Heart left ventricle (tissue), 16 donors: ENCODE measurements at regions of chr11 and their contacts with region 1.

Region 1: DNA sequence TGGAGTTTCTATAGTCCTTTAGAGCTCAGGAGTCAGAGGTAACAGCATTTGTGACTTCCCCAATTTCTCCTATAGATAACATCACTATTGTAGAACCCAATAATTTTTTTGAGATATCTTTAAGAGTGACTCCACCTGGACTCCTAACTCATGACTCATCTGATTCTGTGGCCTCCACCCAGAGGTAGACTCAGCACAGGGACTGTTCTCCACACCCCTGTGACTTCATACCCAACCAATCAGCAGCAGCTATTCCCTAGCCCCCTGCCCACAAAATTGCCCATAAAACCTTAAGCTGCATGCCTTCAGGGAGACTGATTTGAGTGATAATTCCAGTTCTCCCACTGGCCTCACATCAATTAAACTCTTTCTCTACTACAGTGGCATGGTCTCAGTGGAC is 475.4 kb upstream of the FAT3 start:
- DNase-seq: no peak
- ATAC-seq: no peak
- H3K4me3 ChIP-seq: no peak overlapping the region
- H3K27ac ChIP-seq: no peak overlapping the region
- H3K4me1 ChIP-seq: no peaks in the 10 kb centered on the region
- H3K27me3 ChIP-seq: no peaks in the 10 kb centered on the region
- CTCF ChIP-seq: no peak
- POLR2A ChIP-seq: no peak

Region 2: GRCh38 chr11:91825777-91826176 is 76.5 kb after region 1 on chr11:
- intact Hi-C with region 1: loop called in 1 of 10 experiments (anchors 10 kb)
- DNase-seq: no peak
- ATAC-seq: no peak
- H3K4me3 ChIP-seq: no peak overlapping the region
- H3K27ac ChIP-seq: no peak overlapping the region
- H3K4me1 ChIP-seq: no peaks in the 10 kb centered on the region
- H3K27me3 ChIP-seq: no peaks in the 10 kb centered on the region
- CTCF ChIP-seq: no peak
- POLR2A ChIP-seq: no peak

Region 3: DNA sequence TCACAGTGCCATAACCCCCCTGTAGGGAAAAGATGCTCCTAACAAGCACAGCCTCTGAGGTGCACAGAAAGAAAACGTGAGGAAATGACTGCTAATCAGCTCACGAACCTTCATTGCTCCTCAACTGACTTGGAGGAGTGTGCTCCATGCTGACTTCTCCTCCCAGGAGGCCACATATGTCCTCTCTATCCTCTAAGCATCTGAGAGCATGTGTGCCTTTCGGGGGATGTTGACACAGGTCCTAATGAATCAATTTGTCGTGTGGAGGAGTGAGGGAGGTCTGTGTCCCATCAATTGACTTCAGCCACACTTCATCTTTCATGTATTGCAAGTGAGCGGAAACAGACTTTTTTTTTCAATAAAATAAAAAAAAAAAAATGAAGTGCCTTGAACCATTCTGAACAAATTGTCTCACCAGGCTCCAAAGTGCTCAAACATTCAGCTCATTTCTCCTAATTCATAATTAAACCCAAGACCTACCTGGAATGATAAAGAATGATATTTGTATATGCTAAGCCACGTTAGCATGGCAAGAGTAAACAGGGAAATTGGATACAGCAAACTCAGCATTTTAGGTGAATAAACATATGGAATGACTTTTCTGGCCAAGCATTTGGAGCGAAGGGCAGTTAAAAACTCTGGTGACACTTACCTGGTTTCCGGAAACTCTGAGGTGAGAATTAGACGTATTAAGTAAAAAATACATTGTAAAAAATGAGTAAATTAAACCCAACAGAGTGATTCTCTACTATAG is 157.8 kb after region 1 on chr11:
- intact Hi-C with region 1: no loop called
- DNase-seq: no peak
- ATAC-seq: no peak
- H3K4me3 ChIP-seq: no peak overlapping the region
- H3K27ac ChIP-seq: no peak overlapping the region
- H3K4me1 ChIP-seq: no peaks in the 10 kb centered on the region
- H3K27me3 ChIP-seq: no peaks in the 10 kb centered on the region
- CTCF ChIP-seq: no peak
- POLR2A ChIP-seq: no peak